RWPE1 (cell line): ENCODE measurements at regions of chr6 and their contacts with region 1.

Region 1: GRCh38 chr6:159008656-159009288 is 8.8 kb upstream of the RSPH3 start:
- DNase-seq: peak; percentile 52
- H3K27ac ChIP-seq: no peak overlapping the region
- CTCF ChIP-seq: peak; percentile 53

Region 2: GRCh38 chr6:159104163-159104925 is 95.6 kb after region 1 on chr6:
- CTCF ChIA-PET with region 1: interaction called, 21 read pairs
- POLR2A ChIA-PET with region 1: no interaction called
- DNase-seq: peak; percentile 69
- H3K27ac ChIP-seq: no peak overlapping the region
- CTCF ChIP-seq: peak; percentile 77

Region 3: GRCh38 chr6:159134701-159135364 is 126.1 kb after region 1 on chr6:
- CTCF ChIA-PET with region 1: interaction called, 25 read pairs
- POLR2A ChIA-PET with region 1: interaction called, 3 read pairs
- DNase-seq: peak; percentile 59
- H3K27ac ChIP-seq: no peak overlapping the region
- CTCF ChIP-seq: peak; percentile 91